Caco-2 (cell line): ENCODE measurements at regions of chr17 and their contacts with region 1.

Region 1: GRCh38 chr17:77088455-77089123 is 52.2 kb upstream of the SEC14L1 start:
- DNase-seq: peak; percentile 95 to 96
- H3K4me3 ChIP-seq: peak overlapping the region; percentile 84
- H3K4me3 Mint-ChIP-seq: peak overlapping the region; percentile 89
- H3K27ac Mint-ChIP-seq: peak overlapping the region; percentile 98
- H3K4me1 ChIP-seq: peaks cover 8% of the 10 kb centered on the region
- H3K4me1 Mint-ChIP-seq: peaks cover 13% of the 10 kb centered on the region
- H3K27me3 ChIP-seq: no peaks in the 10 kb centered on the region
- H3K27me3 Mint-ChIP-seq: no peaks in the 10 kb centered on the region
- CTCF ChIP-seq: peak; percentile 84 to 89

Region 2: GRCh38 chr17:76924345-76925342 is 163.9 kb before region 1 on chr17:
- CTCF ChIA-PET with region 1: no interaction called
- POLR2A ChIA-PET with region 1: no interaction called
- intact Hi-C with region 1: no loop called
- DNase-seq: peak in 1 of 2 experiments; percentile 33
- H3K4me3 ChIP-seq: no peak overlapping the region
- H3K4me3 Mint-ChIP-seq: no peak overlapping the region
- H3K27ac Mint-ChIP-seq: no peak overlapping the region
- H3K4me1 ChIP-seq: 0 out of 2 replicates have a peak, but pooled peaks cover 3% of the 10 kb centered on the region
- H3K4me1 Mint-ChIP-seq: peaks cover 8% of the 10 kb centered on the region
- H3K27me3 ChIP-seq: no peaks in the 10 kb centered on the region
- H3K27me3 Mint-ChIP-seq: no peaks in the 10 kb centered on the region
- CTCF ChIP-seq: no peak

Region 3: DNA sequence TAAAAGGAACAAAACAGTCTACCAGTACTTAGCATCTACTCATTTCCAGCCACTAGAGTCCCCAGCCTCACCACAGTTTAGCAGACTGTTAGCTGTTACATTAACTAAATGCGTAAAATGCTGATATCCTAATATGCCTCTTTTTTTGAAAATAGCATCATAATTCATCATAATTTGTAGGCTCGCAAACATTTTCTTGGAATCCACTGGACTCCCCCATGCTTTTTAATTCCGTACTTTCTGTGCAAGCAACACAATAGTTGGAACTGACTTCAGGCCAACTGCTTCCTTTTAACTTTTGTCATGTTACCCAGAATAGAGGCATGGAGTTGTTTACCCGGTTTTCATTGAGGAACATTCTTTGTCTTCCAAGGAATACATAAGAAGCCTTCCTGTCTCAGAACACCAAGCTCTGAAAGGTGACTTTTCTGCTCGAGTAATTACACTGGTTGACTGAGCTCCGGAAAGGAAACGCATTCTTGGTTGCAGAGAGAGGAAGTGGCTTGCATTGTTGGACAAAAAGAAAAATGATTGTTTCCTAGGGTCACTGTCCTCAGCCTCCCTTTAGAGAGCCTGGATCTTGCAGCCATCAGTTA is 21.3 kb after region 1 on chr17:
- CTCF ChIA-PET with region 1: no interaction called
- POLR2A ChIA-PET with region 1: no interaction called
- intact Hi-C with region 1: no loop called
- DNase-seq: no peak
- H3K4me3 ChIP-seq: no peak overlapping the region
- H3K4me3 Mint-ChIP-seq: no peak overlapping the region
- H3K27ac Mint-ChIP-seq: peak overlapping the region; percentile 1
- H3K4me1 ChIP-seq: peaks cover 17% of the 10 kb centered on the region
- H3K4me1 Mint-ChIP-seq: peaks cover 21% of the 10 kb centered on the region
- H3K27me3 ChIP-seq: no peaks in the 10 kb centered on the region
- H3K27me3 Mint-ChIP-seq: no peaks in the 10 kb centered on the region
- CTCF ChIP-seq: no peak

Region 4: GRCh38 chr17:77124192-77124889 is 35.8 kb after region 1 on chr17:
- CTCF ChIA-PET with region 1: interaction called, 8 read pairs
- POLR2A ChIA-PET with region 1: interaction called, 8 read pairs
- intact Hi-C with region 1: loop called (anchors 5 kb)
- DNase-seq: no peak
- H3K4me3 ChIP-seq: no peak overlapping the region
- H3K4me3 Mint-ChIP-seq: no peak overlapping the region
- H3K27ac Mint-ChIP-seq: peak overlapping the region; percentile 84
- H3K4me1 ChIP-seq: peaks cover 51% of the 10 kb centered on the region
- H3K4me1 Mint-ChIP-seq: peaks cover 40% of the 10 kb centered on the region
- H3K27me3 ChIP-seq: no peaks in the 10 kb centered on the region
- H3K27me3 Mint-ChIP-seq: no peaks in the 10 kb centered on the region
- CTCF ChIP-seq: no peak

Region 5: DNA sequence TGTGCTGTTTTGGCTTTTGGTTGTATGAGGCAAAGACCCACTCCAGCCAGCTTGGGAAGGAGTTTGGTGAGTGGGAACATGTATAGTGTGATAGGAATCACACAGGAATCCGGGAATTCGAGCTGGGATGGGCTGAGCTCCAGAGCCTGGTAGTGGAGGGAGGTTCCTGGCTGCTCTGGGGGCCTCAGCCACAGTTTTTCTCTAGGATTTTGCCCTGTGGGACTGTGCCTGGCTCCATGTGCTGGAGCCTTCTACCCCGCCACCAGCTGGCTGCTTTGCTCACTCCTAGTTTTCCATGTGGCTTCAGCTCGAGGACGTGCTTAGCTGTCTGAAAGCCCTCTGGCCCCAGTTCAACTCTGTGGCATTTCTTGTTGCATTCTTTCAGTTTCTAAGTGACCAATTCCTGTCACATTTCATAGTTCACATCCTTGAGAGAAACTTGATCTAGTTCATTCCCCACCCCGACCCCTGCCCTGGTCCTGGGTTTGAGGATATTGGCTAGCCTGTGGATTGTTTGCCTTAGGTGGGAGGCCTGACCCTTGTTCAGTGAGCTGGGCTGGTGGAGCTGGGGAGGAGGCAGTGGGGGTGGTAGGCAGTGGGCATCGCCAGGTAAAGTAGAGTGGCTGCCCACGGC is 57.1 kb after region 1 on chr17:
- CTCF ChIA-PET with region 1: interaction called, 6 read pairs
- POLR2A ChIA-PET with region 1: interaction called, 14 read pairs
- intact Hi-C with region 1: loop called (anchors 2 kb)
- DNase-seq: peak; percentile 57 to 73
- H3K4me3 ChIP-seq: no peak overlapping the region
- H3K4me3 Mint-ChIP-seq: peak overlapping the region; percentile 19
- H3K27ac Mint-ChIP-seq: peak overlapping the region; percentile 93
- H3K4me1 ChIP-seq: peaks cover 44% of the 10 kb centered on the region
- H3K4me1 Mint-ChIP-seq: peaks cover 55% of the 10 kb centered on the region
- H3K27me3 ChIP-seq: no peaks in the 10 kb centered on the region
- H3K27me3 Mint-ChIP-seq: no peaks in the 10 kb centered on the region
- CTCF ChIP-seq: no peak

Region 6: GRCh38 chr17:77208217-77208808 is 119.7 kb after region 1 on chr17:
- CTCF ChIA-PET with region 1: interaction called, 20 read pairs
- POLR2A ChIA-PET with region 1: interaction called, 7 read pairs
- intact Hi-C with region 1: loop called (anchors 1 kb)
- DNase-seq: peak; percentile 58 to 69
- H3K4me3 ChIP-seq: no peak overlapping the region
- H3K4me3 Mint-ChIP-seq: peak overlapping the region; percentile 52
- H3K27ac Mint-ChIP-seq: peak overlapping the region; percentile 84
- H3K4me1 ChIP-seq: peaks cover 13% of the 10 kb centered on the region
- H3K4me1 Mint-ChIP-seq: peaks cover 8% of the 10 kb centered on the region
- H3K27me3 ChIP-seq: no peaks in the 10 kb centered on the region
- H3K27me3 Mint-ChIP-seq: no peaks in the 10 kb centered on the region
- CTCF ChIP-seq: peak in 1 of 2 experiments; percentile 60

Region 7: GRCh38 chr17:77247048-77247541 is 158.5 kb after region 1 on chr17:
- CTCF ChIA-PET with region 1: interaction called, 6 read pairs
- POLR2A ChIA-PET with region 1: no interaction called
- intact Hi-C with region 1: loop called (anchors 1 kb)
- DNase-seq: peak; percentile 80 to 92
- H3K4me3 ChIP-seq: peak overlapping the region; percentile 64
- H3K4me3 Mint-ChIP-seq: peak overlapping the region; percentile 64
- H3K27ac Mint-ChIP-seq: peak overlapping the region; percentile 10
- H3K4me1 ChIP-seq: peaks cover 9% of the 10 kb centered on the region
- H3K4me1 Mint-ChIP-seq: no peaks in the 10 kb centered on the region
- H3K27me3 ChIP-seq: no peaks in the 10 kb centered on the region
- H3K27me3 Mint-ChIP-seq: peaks cover 3% of the 10 kb centered on the region
- CTCF ChIP-seq: peak; percentile 92 to 98